Common myeloid progenitor, CD34-positive (primary cell): ENCODE measurements at regions of chr1 and their contacts with region 1.

Region 1: GRCh38 chr1:45512641-45513054 is 9.0 kb downstream of the PRDX1 start:
- DNase-seq: peak; percentile 61 to 80 (median 71)
- H3K4me3 ChIP-seq: no peak overlapping the region
- H3K27ac ChIP-seq: no peak overlapping the region
- H3K4me1 ChIP-seq: peaks cover 0 to 8% (median 0%) of the 10 kb centered on the region in 4 experiments
- H3K27me3 ChIP-seq: no peaks in the 10 kb centered on the region

Region 2: GRCh38 chr1:45485949-45486348 is 26.7 kb before region 1 on chr1:
- CTCF ChIA-PET with region 1: no interaction called
- POLR2A ChIA-PET with region 1: no interaction called
- DNase-seq: no peak
- H3K4me3 ChIP-seq: no peak overlapping the region
- H3K27ac ChIP-seq: no peak overlapping the region
- H3K4me1 ChIP-seq: peaks cover 2 to 12% (median 8%) of the 10 kb centered on the region in 4 experiments
- H3K27me3 ChIP-seq: no peaks in the 10 kb centered on the region

Region 3: GRCh38 chr1:45499415-45499769 is 13.3 kb before region 1 on chr1:
- CTCF ChIA-PET with region 1: interaction called, 18 read pairs
- POLR2A ChIA-PET with region 1: interaction called, 3 read pairs
- DNase-seq: peak in 2 of 3 donors; percentile 26 to 31
- H3K4me3 ChIP-seq: peak overlapping the region; percentile 70 to 96 (median 82)
- H3K27ac ChIP-seq: peak overlapping the region in 1 of 2 experiments; percentile 59
- H3K4me1 ChIP-seq: peaks cover 7 to 21% (median 14%) of the 10 kb centered on the region in 4 experiments
- H3K27me3 ChIP-seq: no peaks in the 10 kb centered on the region

Region 4: GRCh38 chr1:45543581-45544417 is 31.2 kb after region 1 on chr1:
- CTCF ChIA-PET with region 1: interaction called, 16 read pairs
- POLR2A ChIA-PET with region 1: no interaction called
- DNase-seq: peak; percentile 91 to 98 (median 97)
- H3K4me3 ChIP-seq: peak overlapping the region in 6 of 7 experiments; percentile 17 to 64 (median 36)
- H3K27ac ChIP-seq: peak overlapping the region in 1 of 2 experiments; percentile 57
- H3K4me1 ChIP-seq: peaks cover 30 to 54% (median 44%) of the 10 kb centered on the region in 4 experiments
- H3K27me3 ChIP-seq: no peaks in the 10 kb centered on the region

Region 5: GRCh38 chr1:45550401-45551351 is 38.0 kb after region 1 on chr1 and contains the start of gene AKR1A1:
- CTCF ChIA-PET with region 1: interaction called, 32 read pairs
- POLR2A ChIA-PET with region 1: interaction called, 4 read pairs
- DNase-seq: peak; percentile 85 to 94 (median 92)
- H3K4me3 ChIP-seq: peak within 1 kb of the TSS; percentile 84 to 99 (median 91)
- H3K27ac ChIP-seq: peak within 1 kb of the TSS; percentile 66 to 85
- H3K4me1 ChIP-seq: peaks cover 14 to 41% (median 30%) of the 10 kb centered on the region in 4 experiments
- H3K27me3 ChIP-seq: no peaks in the 10 kb centered on the region

Region 6: GRCh38 chr1:45557422-45557944 is 44.8 kb after region 1 on chr1:
- CTCF ChIA-PET with region 1: interaction called, 171 read pairs
- POLR2A ChIA-PET with region 1: no interaction called
- DNase-seq: no peak
- H3K4me3 ChIP-seq: no peak overlapping the region
- H3K27ac ChIP-seq: peak overlapping the region in 1 of 2 experiments; percentile 33
- H3K4me1 ChIP-seq: peaks cover 2 to 14% (median 7%) of the 10 kb centered on the region in 4 experiments
- H3K27me3 ChIP-seq: no peaks in the 10 kb centered on the region

Region 7: DNA sequence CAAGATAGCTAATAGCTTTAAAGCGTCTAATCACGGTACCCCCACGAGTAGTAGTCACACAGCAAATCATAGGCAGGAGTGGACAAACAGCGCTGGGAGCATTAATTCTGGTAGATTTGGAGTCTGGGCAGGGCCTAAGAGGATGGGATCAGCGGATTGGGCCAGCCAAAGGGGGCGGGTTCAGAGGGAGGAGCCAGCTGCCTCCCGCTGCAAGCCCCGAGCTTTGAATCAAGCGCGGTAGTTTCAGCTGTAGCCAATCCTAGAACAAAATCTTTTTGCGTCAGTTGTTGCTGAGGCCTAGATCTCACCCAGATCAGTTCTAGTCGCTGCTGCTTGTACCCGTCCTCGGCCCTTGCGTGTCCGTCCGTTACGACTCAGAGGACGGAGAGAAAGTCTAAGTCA is 70.6 kb after region 1 on chr1:
- CTCF ChIA-PET with region 1: interaction called, 10 read pairs
- POLR2A ChIA-PET with region 1: interaction called, 3 read pairs
- DNase-seq: peak; percentile 98 to 99 (median 99)
- H3K4me3 ChIP-seq: peak overlapping the region; percentile 66 to 100 (median 96)
- H3K27ac ChIP-seq: peak overlapping the region; percentile 86 to 96
- H3K4me1 ChIP-seq: peaks cover 11 to 43% (median 30%) of the 10 kb centered on the region in 4 experiments
- H3K27me3 ChIP-seq: no peaks in the 10 kb centered on the region